OCI-LY7 (cell line): ENCODE measurements at regions of chr5 and their contacts with region 1.

Region 1: GRCh38 chr5:111494364-111494999 is 17.9 kb downstream of the STARD4 start:
- DNase-seq: no peak
- H3K4me3 ChIP-seq: no peak overlapping the region
- H3K27ac ChIP-seq: no peak overlapping the region
- H3K4me1 ChIP-seq: no peaks in the 10 kb centered on the region
- CTCF ChIP-seq: no peak

Region 2: DNA sequence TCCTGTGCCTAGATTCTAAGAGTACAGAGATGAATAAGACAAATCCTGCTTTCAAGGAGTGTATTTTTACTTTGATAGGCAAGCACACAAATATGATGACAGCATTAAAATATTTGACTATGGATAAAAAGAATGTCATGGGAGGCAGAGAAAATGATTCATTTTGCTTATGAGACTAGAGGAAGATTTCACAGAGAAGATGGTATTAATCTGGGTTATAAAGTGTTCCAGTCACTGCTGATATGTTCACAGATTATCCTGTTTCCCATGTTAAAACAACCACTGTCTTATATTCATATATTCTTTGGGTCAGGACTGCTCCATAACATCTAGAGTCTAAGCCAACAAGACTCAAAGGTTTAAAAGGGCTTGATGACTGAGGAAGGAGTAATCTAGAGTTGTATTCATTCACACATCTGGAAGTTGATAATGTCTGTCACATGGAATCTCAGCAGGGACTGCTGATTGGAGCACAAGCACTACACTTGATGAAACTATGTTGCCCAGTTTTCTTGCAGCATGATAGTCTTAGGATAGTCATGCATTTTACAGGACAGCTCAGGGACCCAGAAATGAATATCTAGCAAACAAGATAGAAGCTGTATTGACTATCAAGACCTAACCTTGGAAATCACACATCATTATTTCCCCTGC is 61.5 kb before region 1 on chr5:
- CTCF ChIA-PET with region 1: no interaction called
- POLR2A ChIA-PET with region 1: no interaction called
- intact Hi-C with region 1: no loop called
- DNase-seq: no peak
- H3K4me3 ChIP-seq: no peak overlapping the region
- H3K27ac ChIP-seq: no peak overlapping the region
- H3K4me1 ChIP-seq: no peaks in the 10 kb centered on the region
- CTCF ChIP-seq: no peak

Region 3: GRCh38 chr5:111505096-111505495 is 10.6 kb after region 1 on chr5:
- CTCF ChIA-PET with region 1: no interaction called
- POLR2A ChIA-PET with region 1: interaction called, 25 read pairs
- intact Hi-C with region 1: no loop called
- DNase-seq: no peak
- H3K4me3 ChIP-seq: no peak overlapping the region
- H3K27ac ChIP-seq: no peak overlapping the region
- H3K4me1 ChIP-seq: peaks cover 13% of the 10 kb centered on the region
- CTCF ChIP-seq: no peak